ENCODE measurements at regions of chr2 and their contacts with region 1.

Region 1: DNA sequence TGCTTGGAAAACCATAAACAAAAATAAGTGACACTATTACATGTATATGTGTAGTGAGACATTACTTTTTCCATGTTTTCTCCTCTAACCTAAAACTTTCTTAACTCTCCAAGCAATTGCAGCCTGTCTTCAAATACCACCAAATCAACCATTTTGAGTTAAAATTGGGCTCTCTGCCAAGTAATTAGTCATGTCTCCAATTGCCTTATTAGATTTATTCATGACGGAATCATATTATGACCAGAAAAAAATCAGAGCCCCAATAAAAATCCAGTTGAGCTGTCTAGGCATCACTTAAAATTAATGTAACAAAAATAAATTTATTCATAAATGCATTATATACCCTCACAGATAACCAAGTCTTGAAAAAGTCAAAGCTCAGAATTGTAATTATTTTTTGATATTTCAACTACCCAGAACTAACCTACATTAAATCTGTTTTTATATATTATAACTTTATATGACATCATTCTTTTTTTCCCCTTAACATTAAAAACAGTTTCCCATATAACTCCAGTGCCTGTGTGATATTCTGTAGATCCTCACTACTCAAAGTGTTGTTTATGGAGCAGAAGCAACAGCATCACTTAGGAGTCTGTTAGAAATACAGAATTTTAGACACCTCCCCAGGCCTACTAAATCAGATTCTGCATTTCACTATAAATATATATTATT is 157.0 kb downstream of the ERBB4 start:
- DNase-seq: no peak
- ATAC-seq: no peak
- H3K4me3 ChIP-seq: no peak overlapping the region
- H3K4me3 Mint-ChIP-seq: no peak overlapping the region
- H3K27ac ChIP-seq: no peak overlapping the region
- H3K27ac Mint-ChIP-seq: no peak overlapping the region
- H3K4me1 ChIP-seq: no peaks in the 10 kb centered on the region
- H3K4me1 Mint-ChIP-seq: no peaks in the 10 kb centered on the region
- H3K27me3 ChIP-seq: no peaks in the 10 kb centered on the region
- H3K27me3 Mint-ChIP-seq: no peaks in the 10 kb centered on the region
- CTCF ChIP-seq: no peak

Region 2: DNA sequence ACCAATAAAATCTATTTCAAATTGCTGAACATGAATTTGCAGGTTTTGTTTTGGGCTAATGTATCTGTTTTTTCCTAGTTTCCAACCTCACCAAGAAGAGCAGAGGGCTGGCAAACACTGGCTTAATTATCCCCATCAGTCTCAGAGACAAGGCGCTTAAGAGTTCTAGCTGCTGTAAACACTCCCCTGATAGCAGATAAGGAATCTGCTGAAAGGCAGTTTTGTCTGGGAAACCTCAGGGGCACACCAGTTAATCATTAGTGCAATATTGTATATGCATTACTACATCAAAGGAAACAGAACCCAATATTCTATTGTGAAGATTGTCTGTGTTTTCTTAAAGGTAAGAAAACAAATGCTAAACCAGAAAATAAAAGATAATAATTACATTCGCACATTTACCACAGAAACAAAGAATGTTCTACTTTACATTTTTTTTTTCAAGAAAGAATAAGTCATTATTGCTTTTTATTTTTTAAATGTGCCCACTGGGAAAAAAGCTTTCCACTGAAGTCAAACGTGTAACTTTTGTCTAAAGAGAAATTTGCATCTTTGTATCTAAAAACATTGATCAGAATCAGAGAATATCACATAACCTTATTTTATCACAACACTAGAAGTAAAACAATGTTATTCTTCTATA is 22.0 kb before region 1 on chr2:
- CTCF ChIA-PET with region 1: no interaction called
- POLR2A ChIA-PET with region 1: no interaction called
- intact Hi-C with region 1: loop called (anchors 1 kb)
- DNase-seq: no peak
- ATAC-seq: no peak
- H3K4me3 ChIP-seq: no peak overlapping the region
- H3K4me3 Mint-ChIP-seq: no peak overlapping the region
- H3K27ac ChIP-seq: no peak overlapping the region
- H3K27ac Mint-ChIP-seq: no peak overlapping the region
- H3K4me1 ChIP-seq: no peaks in the 10 kb centered on the region
- H3K4me1 Mint-ChIP-seq: no peaks in the 10 kb centered on the region
- H3K27me3 ChIP-seq: no peaks in the 10 kb centered on the region
- H3K27me3 Mint-ChIP-seq: no peaks in the 10 kb centered on the region
- CTCF ChIP-seq: no peak

Measured in B cell (primary cell).